Sciatic nerve (tissue), 2 donors: ENCODE measurements at regions of chr11 and their contacts with region 1.

Region 1: GRCh38 chr11:64723117-64723906 is at the start of gene NRXN2:
- DNase-seq: peak; percentile 88
- ATAC-seq: peak; percentile 97
- total RNA-seq, gene NRXN2: 13.7 TPM

Region 2: DNA sequence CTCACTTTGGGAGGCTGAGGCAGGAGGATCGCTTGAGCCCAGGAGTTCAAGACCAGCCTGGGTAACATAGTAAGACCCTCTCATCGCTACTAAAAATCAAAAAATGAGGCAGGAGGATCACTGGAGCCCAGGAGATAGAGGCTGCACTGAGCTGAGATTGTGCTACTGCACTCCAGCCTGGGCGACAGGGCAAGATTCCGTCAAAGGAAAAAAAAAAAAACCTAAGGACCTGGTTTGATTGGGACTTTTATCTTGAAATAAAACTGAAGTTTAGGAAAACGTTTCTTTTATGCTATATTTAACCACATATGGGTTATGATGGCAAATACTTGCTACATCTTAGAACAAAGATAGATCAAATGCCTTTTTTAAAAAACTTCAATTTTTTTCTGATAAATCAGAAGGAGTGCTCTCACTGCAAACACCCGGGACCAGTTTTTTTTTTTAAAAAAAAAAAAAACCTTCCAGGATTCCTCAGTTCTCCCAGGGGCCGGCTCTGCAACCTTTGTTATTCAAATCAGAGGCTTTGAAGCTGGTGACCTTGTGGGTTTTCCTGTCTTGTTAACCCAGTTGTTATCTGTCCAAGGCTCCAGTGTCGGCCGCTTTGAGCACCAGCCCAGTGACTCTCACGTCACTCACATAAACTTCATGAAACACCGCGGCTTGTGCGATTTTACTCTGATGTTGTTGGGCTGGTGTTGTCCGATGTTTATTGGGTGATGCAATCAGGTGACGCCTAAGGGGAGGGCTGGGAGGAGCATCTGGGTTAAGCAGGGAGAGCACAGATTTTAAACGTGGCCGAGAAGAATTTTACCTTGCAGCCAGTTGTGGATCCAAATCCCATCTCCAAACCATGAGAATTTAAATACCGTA is 157.0 kb before region 1 on chr11:
- intact Hi-C with region 1: loop called (anchors 10 kb)
- DNase-seq: no peak
- ATAC-seq: peak; percentile 93

Region 3: GRCh38 chr11:64638018-64638665 is 85.2 kb before region 1 on chr11:
- intact Hi-C with region 1: no loop called
- DNase-seq: peak; percentile 55
- ATAC-seq: no peak